ENCODE measurements at regions of chr14 and their contacts with region 1.

Region 1: GRCh38 chr14:69586404-69586803 is 11.7 kb upstream of the CCDC177 start:
- DNase-seq: no peak
- H3K4me3 ChIP-seq: no peak overlapping the region
- H3K27ac ChIP-seq: no peak overlapping the region
- H3K4me1 ChIP-seq: no peaks in the 10 kb centered on the region
- H3K27me3 ChIP-seq: no peaks in the 10 kb centered on the region
- CTCF ChIP-seq: no peak

Region 2: GRCh38 chr14:68951042-68951914 is 635.1 kb before region 1 on chr14:
- CTCF ChIA-PET with region 1: no interaction called
- POLR2A ChIA-PET with region 1: no interaction called
- intact Hi-C with region 1: no loop called
- DNase-seq: peak; percentile 96 to 97
- H3K4me3 ChIP-seq: peak overlapping the region; percentile 32; the same call in 1 of the 2 replicates
- H3K27ac ChIP-seq: peak overlapping the region; percentile 77
- H3K4me1 ChIP-seq: peaks cover 60% of the 10 kb centered on the region
- H3K27me3 ChIP-seq: no peaks in the 10 kb centered on the region
- CTCF ChIP-seq: no peak

Region 3: DNA sequence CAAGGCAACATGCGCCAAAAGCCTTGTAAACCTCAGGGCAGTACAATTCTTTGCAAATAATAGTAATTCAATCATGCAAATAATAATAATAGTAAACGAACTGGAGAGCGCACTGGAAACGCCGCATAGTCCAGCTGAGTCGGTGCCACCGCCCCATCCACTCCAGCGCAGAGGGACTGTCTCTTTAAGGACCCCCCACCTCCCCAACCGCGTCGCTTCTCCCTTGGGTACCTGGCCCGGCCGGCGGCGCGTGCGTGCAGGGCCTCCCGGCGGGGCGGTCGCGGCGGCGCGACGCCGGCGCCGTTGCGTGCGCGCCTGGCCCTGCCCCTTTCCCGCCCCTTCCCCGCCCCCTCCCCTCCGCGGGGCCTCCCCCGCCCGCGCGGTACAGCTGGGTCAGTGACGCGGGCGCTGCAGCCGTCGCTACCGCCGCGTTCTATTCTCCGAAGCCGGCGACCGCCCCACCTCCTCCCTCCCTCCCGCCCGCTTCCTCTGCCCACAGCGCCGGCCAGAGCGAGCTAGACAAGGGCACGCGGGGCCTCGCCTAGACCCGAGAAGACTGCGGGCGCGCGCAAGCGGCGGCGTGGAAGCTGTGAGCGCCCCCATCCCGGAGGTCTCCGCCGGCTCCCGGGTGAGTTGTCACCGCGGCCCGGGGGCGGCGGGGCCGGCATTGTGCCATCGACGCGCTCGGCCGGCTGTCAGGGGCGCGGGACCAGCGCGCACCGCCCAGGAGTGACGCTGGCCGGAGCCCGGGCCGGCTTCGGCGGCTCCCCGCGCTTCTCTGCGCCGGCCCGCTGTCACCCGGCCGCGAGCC is 25.0 kb after region 1 on chr14 and contains the start of gene SUSD6:
- CTCF ChIA-PET with region 1: interaction called, 10 read pairs
- POLR2A ChIA-PET with region 1: no interaction called
- intact Hi-C with region 1: no loop called
- DNase-seq: peak; percentile 65 to 91
- H3K4me3 ChIP-seq: peak within 1 kb of the TSS; percentile 74
- H3K27ac ChIP-seq: no peak within 1 kb of the TSS
- H3K4me1 ChIP-seq: peaks cover 17% of the 10 kb centered on the region
- H3K27me3 ChIP-seq: no peaks in the 10 kb centered on the region
- CTCF ChIP-seq: no peak
- total RNA-seq, gene SUSD6: 24.1 and 43.3 TPM in 2 replicates

Region 4: GRCh38 chr14:69715725-69716477 is 129.5 kb after region 1 on chr14:
- CTCF ChIA-PET with region 1: no interaction called
- POLR2A ChIA-PET with region 1: no interaction called
- intact Hi-C with region 1: loop called (anchors 2 kb)
- DNase-seq: peak in 1 of 2 experiments; percentile 49
- H3K4me3 ChIP-seq: no peak overlapping the region
- H3K27ac ChIP-seq: no peak overlapping the region
- H3K4me1 ChIP-seq: no peaks in the 10 kb centered on the region
- H3K27me3 ChIP-seq: no peaks in the 10 kb centered on the region
- CTCF ChIP-seq: no peak

Region 5: GRCh38 chr14:69818757-69819191 is 232.4 kb after region 1 on chr14:
- CTCF ChIA-PET with region 1: no interaction called
- POLR2A ChIA-PET with region 1: no interaction called
- intact Hi-C with region 1: loop called (anchors 5 kb)
- DNase-seq: peak; percentile 53 to 66
- H3K4me3 ChIP-seq: no peak overlapping the region
- H3K27ac ChIP-seq: no peak overlapping the region
- H3K4me1 ChIP-seq: no peaks in the 10 kb centered on the region
- H3K27me3 ChIP-seq: peaks cover 43% of the 10 kb centered on the region
- CTCF ChIP-seq: peak; percentile 99

Measured in PC-9 (cell line).